Naive thymus-derived CD4-positive, alpha-beta T cell (primary cell): ENCODE measurements at regions of chr1 and their contacts with region 1.

Region 1: DNA sequence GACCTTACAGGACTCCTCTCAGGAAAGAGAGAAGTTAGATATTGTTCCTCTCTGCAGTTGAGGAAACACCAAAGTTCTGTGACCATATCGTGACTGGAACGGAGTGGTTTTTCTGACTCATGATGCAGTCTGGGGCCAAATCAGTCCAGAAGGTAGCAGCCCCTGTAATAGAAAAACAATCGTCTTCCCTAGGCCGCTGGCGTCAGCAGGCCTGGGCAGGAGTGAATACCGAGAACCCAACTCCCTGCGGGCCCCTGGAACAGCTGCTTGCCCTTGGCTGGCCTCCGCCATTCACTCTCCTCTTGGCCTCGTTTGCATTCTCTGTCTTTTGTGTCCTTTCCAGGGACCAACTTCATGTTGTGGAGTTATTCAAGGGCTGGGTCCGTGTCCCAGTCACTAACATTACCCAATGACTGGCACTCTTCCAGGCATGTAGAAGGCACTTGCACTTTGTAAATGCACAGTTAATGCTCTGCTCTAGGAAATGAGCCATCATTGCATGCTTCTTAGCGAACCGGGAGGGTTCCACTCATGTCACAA is 10.9 kb upstream of the CD101 start:
- DNase-seq: no peak
- ATAC-seq: peak; percentile 15
- H3K4me3 ChIP-seq: no peak overlapping the region
- H3K4me3 Mint-ChIP-seq: no peak overlapping the region
- H3K27ac ChIP-seq: no peak overlapping the region
- H3K27ac Mint-ChIP-seq: no peak overlapping the region
- H3K4me1 ChIP-seq: peaks cover 6 to 48% of the 10 kb centered on the region in 2 donors
- H3K4me1 Mint-ChIP-seq: peaks cover 22 to 70% (median 67%) of the 10 kb centered on the region in 7 donors
- H3K27me3 ChIP-seq: no peaks in the 10 kb centered on the region
- H3K27me3 Mint-ChIP-seq: no peaks in the 10 kb centered on the region

Region 2: GRCh38 chr1:116763787-116764465 is 226.8 kb before region 1 on chr1:
- CTCF ChIA-PET with region 1: no interaction called
- POLR2A ChIA-PET with region 1: interaction called, 20 read pairs
- intact Hi-C with region 1: loop called in 1 of 2 experiments (anchors 2 kb)
- DNase-seq: peak in 2 of 9 donors; percentile 64 to 66
- ATAC-seq: peak; percentile 10
- H3K4me3 ChIP-seq: peak overlapping the region; percentile 17
- H3K4me3 Mint-ChIP-seq: peak overlapping the region; percentile 79 to 99 (median 85)
- H3K27ac ChIP-seq: peak overlapping the region; percentile 89
- H3K27ac Mint-ChIP-seq: peak overlapping the region; percentile 93 to 100 (median 97)
- H3K4me1 ChIP-seq: peaks cover 94 to 100% of the 10 kb centered on the region in 2 donors
- H3K4me1 Mint-ChIP-seq: peaks cover 74 to 100% (median 94%) of the 10 kb centered on the region in 7 donors
- H3K27me3 ChIP-seq: no peaks in the 10 kb centered on the region
- H3K27me3 Mint-ChIP-seq: no peaks in the 10 kb centered on the region

Region 3: DNA sequence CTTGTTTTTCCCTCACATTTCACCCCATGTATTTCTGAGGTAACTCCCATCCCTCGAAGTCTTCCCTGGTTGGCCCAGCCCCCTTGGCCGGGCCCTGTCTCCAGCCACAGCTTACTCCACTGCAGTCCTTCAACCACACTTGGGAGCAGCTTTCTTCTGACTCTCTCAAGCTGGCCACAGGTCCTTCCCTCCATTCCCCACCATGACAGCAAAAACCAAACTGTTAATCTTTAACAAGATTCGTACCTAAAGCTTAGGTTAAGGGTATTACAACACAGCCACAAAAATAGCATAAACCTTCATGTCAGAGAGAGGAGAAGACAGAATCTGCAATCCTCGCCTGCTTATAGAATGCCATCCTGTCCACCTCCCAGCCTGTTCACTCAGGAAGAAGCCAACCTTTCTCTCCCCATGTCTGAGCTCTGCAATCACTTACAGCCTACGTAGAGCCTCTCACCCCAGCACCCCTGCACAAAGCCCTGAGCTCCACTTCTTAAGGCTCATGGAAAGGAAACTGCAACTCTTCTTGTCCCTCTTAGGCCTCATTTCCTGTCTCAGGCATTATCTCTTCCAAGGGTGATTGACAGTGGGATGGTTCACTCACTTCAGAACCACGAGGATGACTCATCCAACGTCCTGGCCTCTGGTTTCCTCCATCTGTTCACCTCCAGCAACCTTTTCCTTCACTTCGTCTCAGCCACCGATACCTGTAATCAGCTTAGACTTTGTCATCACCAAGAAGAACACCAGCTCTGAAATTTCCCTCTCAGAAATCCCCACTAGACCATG is 163.7 kb before region 1 on chr1:
- CTCF ChIA-PET with region 1: no interaction called
- POLR2A ChIA-PET with region 1: interaction called, 3 read pairs
- intact Hi-C with region 1: loop called in 1 of 2 experiments (anchors 2 kb)
- DNase-seq: peak in 3 of 9 donors; percentile 11 to 64 (median 46)
- ATAC-seq: peak; percentile 59
- H3K4me3 ChIP-seq: no peak overlapping the region
- H3K4me3 Mint-ChIP-seq: peak overlapping the region in 6 of 10 donors; percentile 1 to 76 (median 22)
- H3K27ac ChIP-seq: no peak overlapping the region
- H3K27ac Mint-ChIP-seq: peak overlapping the region; percentile 10 to 94 (median 77)
- H3K4me1 ChIP-seq: peaks cover 10 to 12% of the 10 kb centered on the region in 2 donors
- H3K4me1 Mint-ChIP-seq: peaks cover 11 to 60% (median 25%) of the 10 kb centered on the region in 7 donors
- H3K27me3 ChIP-seq: no peaks in the 10 kb centered on the region
- H3K27me3 Mint-ChIP-seq: peaks cover 0 to 3% (median 0%) of the 10 kb centered on the region in 5 donors

Region 4: DNA sequence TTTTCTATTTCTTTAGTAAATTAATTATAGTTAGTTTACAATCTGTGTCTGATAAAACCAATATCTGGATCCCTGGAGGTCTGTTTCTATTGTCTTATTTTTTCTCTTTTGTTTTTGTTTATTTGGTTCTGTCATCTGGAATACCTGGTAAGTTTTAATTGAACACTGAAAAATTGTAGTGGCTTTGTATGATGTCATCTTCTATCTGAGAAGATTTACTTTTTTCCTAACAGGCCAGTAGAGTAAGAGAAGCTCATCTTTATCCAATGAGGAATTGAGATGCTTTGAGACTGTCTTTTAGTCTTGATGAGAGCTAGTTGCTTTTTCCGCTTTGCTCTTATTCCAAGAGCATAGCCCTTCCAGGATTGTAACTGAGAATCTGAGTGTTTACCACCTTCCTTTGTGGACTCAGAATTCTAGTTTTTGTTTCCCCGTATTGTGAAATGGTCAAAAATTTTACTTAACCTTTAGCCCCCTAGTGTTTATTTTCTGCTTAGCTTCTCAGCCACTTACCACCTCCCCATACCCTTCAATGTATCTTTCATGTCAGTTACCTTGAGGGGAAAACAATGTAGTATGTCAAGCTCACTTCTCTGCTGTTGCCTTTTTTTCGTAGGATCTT is 56.0 kb before region 1 on chr1:
- CTCF ChIA-PET with region 1: interaction called, 4 read pairs
- POLR2A ChIA-PET with region 1: interaction called, 3 read pairs
- intact Hi-C with region 1: loop called (anchors 2 kb)
- DNase-seq: peak in 5 of 9 donors; percentile 34 to 46 (median 39)
- ATAC-seq: peak; percentile 58
- H3K4me3 ChIP-seq: no peak overlapping the region
- H3K4me3 Mint-ChIP-seq: peak overlapping the region in 4 of 10 donors; percentile 4 to 40 (median 19)
- H3K27ac ChIP-seq: no peak overlapping the region
- H3K27ac Mint-ChIP-seq: peak overlapping the region in 8 of 9 donors; percentile 21 to 82 (median 52)
- H3K4me1 ChIP-seq: peaks cover 20 to 22% of the 10 kb centered on the region in 2 donors
- H3K4me1 Mint-ChIP-seq: peaks cover 14 to 28% (median 24%) of the 10 kb centered on the region in 7 donors
- H3K27me3 ChIP-seq: no peaks in the 10 kb centered on the region
- H3K27me3 Mint-ChIP-seq: no peaks in the 10 kb centered on the region

Region 5: DNA sequence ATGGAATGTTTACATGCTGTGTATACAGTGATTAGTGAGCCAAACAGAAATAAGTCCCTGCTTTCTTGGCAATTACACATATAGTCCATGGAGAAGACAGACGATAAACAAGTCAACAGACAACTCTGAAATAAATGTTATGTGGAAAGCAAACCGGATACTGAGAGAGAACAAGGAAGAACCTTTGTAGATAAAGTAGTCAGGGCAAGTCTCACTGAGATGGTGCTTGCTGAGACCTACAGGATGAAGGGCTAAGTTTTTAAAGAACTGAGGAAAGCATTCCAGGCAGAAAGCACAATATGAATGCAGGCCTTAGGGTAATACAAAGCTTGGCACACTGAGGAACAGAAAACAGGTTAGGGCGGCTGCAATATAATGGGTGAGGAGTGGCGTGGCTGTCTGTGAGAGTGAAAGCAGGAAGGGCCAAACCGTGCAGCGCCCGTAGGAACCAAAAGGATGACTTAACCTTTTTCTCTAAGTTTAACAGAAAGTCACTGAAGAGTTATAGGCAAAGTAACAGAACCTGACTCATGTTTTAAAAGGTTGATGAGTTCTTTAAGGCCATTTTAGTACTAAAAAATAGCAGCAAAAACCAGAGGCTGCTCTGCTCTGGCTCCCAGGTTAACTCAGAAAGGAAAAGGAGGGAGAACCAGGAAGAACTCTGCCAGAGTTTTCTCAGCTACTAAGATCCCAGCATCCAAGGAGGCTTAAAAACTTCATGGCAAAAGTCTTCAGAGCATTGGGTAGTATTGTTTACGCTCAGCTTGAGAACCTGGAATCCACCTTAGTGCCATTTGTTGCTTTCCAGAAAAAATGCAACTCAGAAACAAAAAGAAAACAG is 60.8 kb after region 1 on chr1:
- CTCF ChIA-PET with region 1: interaction called, 9 read pairs
- POLR2A ChIA-PET with region 1: interaction called, 75 read pairs
- intact Hi-C with region 1: loop called (anchors 1 kb)
- DNase-seq: peak in 6 of 9 donors; percentile 13 to 34 (median 28)
- ATAC-seq: peak; percentile 34
- H3K4me3 ChIP-seq: peak overlapping the region; percentile 26
- H3K4me3 Mint-ChIP-seq: peak overlapping the region; percentile 49 to 94 (median 84)
- H3K27ac ChIP-seq: peak overlapping the region; percentile 54
- H3K27ac Mint-ChIP-seq: peak overlapping the region; percentile 87 to 99 (median 95)
- H3K4me1 ChIP-seq: peaks cover 6 to 45% of the 10 kb centered on the region in 2 donors
- H3K4me1 Mint-ChIP-seq: peaks cover 30 to 66% (median 58%) of the 10 kb centered on the region in 7 donors
- H3K27me3 ChIP-seq: no peaks in the 10 kb centered on the region
- H3K27me3 Mint-ChIP-seq: no peaks in the 10 kb centered on the region